SK-N-SH (cell line): ENCODE measurements at regions of chr6 and their contacts with region 1.

Region 1: GRCh38 chr6:5030596-5031136 is 26.8 kb upstream of the RPP40 start:
- DNase-seq: peak; percentile 74
- H3K4me3 ChIP-seq: no peak overlapping the region
- H3K27ac ChIP-seq: no peak overlapping the region
- H3K4me1 ChIP-seq: no peaks in the 10 kb centered on the region; a peak in 2 of 4 replicates
- H3K27me3 ChIP-seq: no peaks in the 10 kb centered on the region
- CTCF ChIP-seq: peak; percentile 69
- EP300 ChIP-seq: no peak
- RAD21 ChIP-seq: peak; percentile 69

Region 2: GRCh38 chr6:5044866-5045265 is 14.2 kb after region 1 on chr6:
- CTCF ChIA-PET with region 1: interaction called, 13 read pairs
- POLR2A ChIA-PET with region 1: no interaction called
- DNase-seq: no peak
- H3K4me3 ChIP-seq: no peak overlapping the region
- H3K27ac ChIP-seq: no peak overlapping the region
- H3K4me1 ChIP-seq: no peaks in the 10 kb centered on the region
- H3K27me3 ChIP-seq: no peaks in the 10 kb centered on the region
- CTCF ChIP-seq: no peak
- EP300 ChIP-seq: no peak
- RAD21 ChIP-seq: no peak